Vagina (tissue), 2 donors: ENCODE measurements at regions of chr21 and their contacts with region 1.

Region 1: GRCh38 chr21:16534408-16535101 is 804.8 kb downstream of the USP25 start:
- DNase-seq: peak in 1 of 2 donors; percentile 94
- H3K4me3 ChIP-seq: peak overlapping the region; percentile 36 to 47
- H3K27ac ChIP-seq: peak overlapping the region; percentile 88
- H3K4me1 ChIP-seq: peaks cover 24% of the 10 kb centered on the region
- H3K27me3 ChIP-seq: no peaks in the 10 kb centered on the region
- CTCF ChIP-seq: no peak
- POLR2A ChIP-seq: no peak

Region 2: GRCh38 chr21:16588433-16588860 is 53.9 kb after region 1 on chr21:
- intact Hi-C with region 1: loop called (anchors 10 kb)
- DNase-seq: no peak
- H3K4me3 ChIP-seq: peak overlapping the region; percentile 39 to 43
- H3K27ac ChIP-seq: peak overlapping the region; percentile 80
- H3K4me1 ChIP-seq: peaks cover 66% of the 10 kb centered on the region
- H3K27me3 ChIP-seq: no peaks in the 10 kb centered on the region
- CTCF ChIP-seq: no peak
- POLR2A ChIP-seq: peak in 1 of 2 donors; percentile 43